Dendritic cell treated with granulocyte-macrophage colony-stimulating factor and Interleukin-4, amounts not matched to agents 40 ng/mL and 50 ng/mL, for 4 days (primary cell): ENCODE measurements at regions of chr11 and their contacts with region 1.

Region 1: GRCh38 chr11:74929431-74930363 is 19.2 kb downstream of the XRRA1 start:
- H3K4me3 Mint-ChIP-seq: no peak overlapping the region
- H3K27ac Mint-ChIP-seq: no peak overlapping the region
- H3K4me1 Mint-ChIP-seq: no peaks in the 10 kb centered on the region
- H3K27me3 Mint-ChIP-seq: no peaks in the 10 kb centered on the region

Region 2: DNA sequence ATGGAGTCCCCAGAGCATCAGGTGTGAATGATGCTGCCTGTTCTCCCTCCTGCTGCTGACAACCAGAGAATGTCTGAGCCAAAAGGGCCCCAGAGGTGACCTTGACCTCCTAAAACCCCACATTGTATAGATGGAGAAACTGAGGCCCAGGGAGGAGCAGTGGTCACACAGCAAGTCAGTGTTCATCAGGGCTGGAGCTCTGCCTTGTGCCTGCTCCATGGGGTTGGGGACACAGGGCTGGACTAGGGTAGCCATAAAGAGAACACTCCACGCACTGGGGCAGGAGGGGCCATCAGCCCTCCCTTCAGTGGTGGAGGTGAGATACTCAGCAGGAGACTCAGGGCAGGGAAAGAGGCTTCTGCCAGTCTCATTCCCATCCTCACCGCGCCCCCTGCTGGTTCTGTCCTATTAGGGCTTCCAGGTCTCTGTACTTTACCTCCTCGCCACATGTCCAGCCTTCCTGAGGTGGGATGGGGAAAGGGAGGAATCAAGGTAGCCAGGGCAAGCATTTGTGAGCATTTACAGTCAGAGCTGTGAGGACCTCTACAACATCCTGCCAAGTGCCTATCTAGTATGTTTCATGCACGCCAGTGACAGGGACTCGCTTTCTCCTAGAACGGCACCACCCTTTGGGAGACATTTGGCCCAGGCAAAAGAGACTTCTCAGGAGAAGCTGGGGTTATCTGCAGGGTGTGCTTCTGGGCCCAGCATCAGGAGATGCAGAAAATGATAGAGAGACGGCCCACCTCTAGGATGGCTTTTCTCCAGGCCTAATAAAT is 102.3 kb after region 1 on chr11:
- intact Hi-C with region 1: loop called (anchors 1 kb)
- H3K4me3 Mint-ChIP-seq: no peak overlapping the region
- H3K27ac Mint-ChIP-seq: peak overlapping the region; percentile 16
- H3K4me1 Mint-ChIP-seq: peaks cover 10% of the 10 kb centered on the region
- H3K27me3 Mint-ChIP-seq: no peaks in the 10 kb centered on the region

Region 3: GRCh38 chr11:75133976-75134375 is 204.3 kb after region 1 on chr11:
- intact Hi-C with region 1: loop called (anchors 10 kb)
- H3K4me3 Mint-ChIP-seq: no peak overlapping the region
- H3K27ac Mint-ChIP-seq: no peak overlapping the region
- H3K4me1 Mint-ChIP-seq: no peaks in the 10 kb centered on the region
- H3K27me3 Mint-ChIP-seq: peaks cover 37% of the 10 kb centered on the region

Region 4: GRCh38 chr11:75248690-75249268 is 319.1 kb after region 1 on chr11:
- intact Hi-C with region 1: loop called (anchors 1 kb)
- H3K4me3 Mint-ChIP-seq: no peak overlapping the region
- H3K27ac Mint-ChIP-seq: no peak overlapping the region
- H3K4me1 Mint-ChIP-seq: no peaks in the 10 kb centered on the region
- H3K27me3 Mint-ChIP-seq: peaks cover 56% of the 10 kb centered on the region